ENCODE measurements at regions of chr7 and their contacts with region 1.

Region 1: GRCh38 chr7:24979863-24980533 is at the start of gene OSBPL3:
- DNase-seq: peak; percentile 100
- H3K4me3 ChIP-seq: peak within 1 kb of the TSS; percentile 73 to 97
- H3K27ac ChIP-seq: peak within 1 kb of the TSS; percentile 84 to 87
- H3K4me1 ChIP-seq: peaks cover 21 to 28% of the 10 kb centered on the region in 2 experiments; a peak in 3 of 4 replicates
- H3K27me3 ChIP-seq: no peaks in the 10 kb centered on the region
- CTCF ChIP-seq: no peak
- EP300 ChIP-seq: peak in 1 of 2 experiments; percentile 2; a peak in 1 of 4 replicates
- RAD21 ChIP-seq: peak; percentile 38
- polyA plus RNA-seq, gene OSBPL3: 22.6 and 23.2 TPM in 2 replicates

Region 2: DNA sequence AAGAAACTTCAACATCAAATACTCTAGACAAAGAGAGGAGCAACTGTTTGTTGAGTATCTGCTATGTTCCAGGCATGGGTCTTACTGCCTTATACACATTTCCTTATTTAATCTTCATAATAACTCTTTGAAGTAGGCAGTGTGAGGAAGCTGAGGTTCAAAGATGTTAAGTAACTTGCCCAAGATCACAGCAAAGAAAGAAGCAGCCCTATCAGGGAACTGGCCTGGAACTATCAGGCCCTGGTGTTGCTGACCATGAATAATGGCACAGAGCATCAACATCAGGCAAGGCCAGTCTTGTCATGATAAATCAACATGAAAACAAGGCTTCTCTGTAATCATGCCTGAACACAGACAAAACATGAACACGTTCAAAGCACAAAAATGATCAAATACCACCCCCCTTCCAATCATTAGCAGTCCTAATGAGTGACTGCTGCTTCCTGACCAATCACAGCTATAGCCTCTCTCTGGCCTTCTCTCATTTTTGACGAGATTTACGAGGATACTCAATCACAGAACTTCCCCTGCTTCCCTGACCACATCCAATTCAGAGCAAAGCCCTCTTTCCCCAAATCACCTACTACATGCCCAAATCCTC is 225.0 kb before region 1 on chr7:
- CTCF ChIA-PET with region 1: no interaction called
- POLR2A ChIA-PET with region 1: no interaction called
- DNase-seq: no peak
- H3K4me3 ChIP-seq: no peak overlapping the region
- H3K27ac ChIP-seq: peak overlapping the region in 1 of 2 experiments; percentile 83; a peak in 2 of 4 replicates
- H3K4me1 ChIP-seq: peaks cover 21 to 35% of the 10 kb centered on the region in 2 experiments; a peak in 3 of 4 replicates
- H3K27me3 ChIP-seq: no peaks in the 10 kb centered on the region
- CTCF ChIP-seq: no peak
- EP300 ChIP-seq: no peak
- RAD21 ChIP-seq: no peak

Region 3: GRCh38 chr7:24825931-24826661 is 153.9 kb before region 1 on chr7:
- CTCF ChIA-PET with region 1: interaction called, 57 read pairs
- POLR2A ChIA-PET with region 1: interaction called, 3 read pairs
- DNase-seq: no peak
- H3K4me3 ChIP-seq: no peak overlapping the region
- H3K27ac ChIP-seq: peak overlapping the region; percentile 72 to 95; a peak in 3 of 4 replicates
- H3K4me1 ChIP-seq: peaks cover 24 to 60% of the 10 kb centered on the region in 2 experiments
- H3K27me3 ChIP-seq: no peaks in the 10 kb centered on the region
- CTCF ChIP-seq: no peak
- EP300 ChIP-seq: peak in 1 of 2 experiments; percentile 35; a peak in 1 of 4 replicates
- RAD21 ChIP-seq: no peak

Region 4: DNA sequence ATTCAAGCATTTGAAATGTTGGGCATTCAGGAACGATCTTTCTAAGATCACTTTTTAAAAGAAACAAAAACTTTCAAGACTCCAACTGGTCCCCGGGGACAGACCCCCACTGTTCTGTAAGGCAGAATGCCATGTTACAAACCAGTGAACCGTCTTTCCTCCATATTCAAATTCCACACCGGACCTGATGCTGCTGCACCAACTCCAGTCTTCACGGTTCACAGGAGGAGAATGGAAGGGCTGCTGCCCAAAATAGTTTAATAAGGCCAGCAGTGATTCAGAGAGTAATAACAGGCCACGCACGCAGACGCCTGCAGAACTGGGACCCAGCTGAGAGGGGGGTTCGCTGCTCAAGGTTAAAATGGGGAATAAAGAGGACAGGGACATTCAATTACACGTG is 47.2 kb before region 1 on chr7:
- CTCF ChIA-PET with region 1: interaction called, 10 read pairs
- POLR2A ChIA-PET with region 1: no interaction called
- DNase-seq: no peak
- H3K4me3 ChIP-seq: no peak overlapping the region
- H3K27ac ChIP-seq: no peak overlapping the region
- H3K4me1 ChIP-seq: peaks cover 2 to 13% of the 10 kb centered on the region in 2 experiments; a peak in 3 of 4 replicates
- H3K27me3 ChIP-seq: no peaks in the 10 kb centered on the region
- CTCF ChIP-seq: no peak
- EP300 ChIP-seq: no peak
- RAD21 ChIP-seq: no peak

Region 5: GRCh38 chr7:24965831-24966709 is 13.9 kb before region 1 on chr7:
- CTCF ChIA-PET with region 1: interaction called, 13 read pairs
- POLR2A ChIA-PET with region 1: no interaction called
- DNase-seq: no peak
- H3K4me3 ChIP-seq: no peak overlapping the region
- H3K27ac ChIP-seq: no peak overlapping the region
- H3K4me1 ChIP-seq: peaks cover 12 to 18% of the 10 kb centered on the region in 2 experiments
- H3K27me3 ChIP-seq: no peaks in the 10 kb centered on the region
- CTCF ChIP-seq: no peak
- EP300 ChIP-seq: no peak
- RAD21 ChIP-seq: no peak

Region 6: GRCh38 chr7:25069900-25070443 is 90.0 kb after region 1 on chr7:
- CTCF ChIA-PET with region 1: interaction called, 13 read pairs
- POLR2A ChIA-PET with region 1: no interaction called
- DNase-seq: peak; percentile 83
- H3K4me3 ChIP-seq: peak overlapping the region in 1 of 2 experiments; percentile 30; a peak in 1 of 4 replicates
- H3K27ac ChIP-seq: no peak overlapping the region
- H3K4me1 ChIP-seq: no peaks in the 10 kb centered on the region
- H3K27me3 ChIP-seq: no peaks in the 10 kb centered on the region
- CTCF ChIP-seq: peak; percentile 99
- EP300 ChIP-seq: no peak
- RAD21 ChIP-seq: peak; percentile 93

Region 7: DNA sequence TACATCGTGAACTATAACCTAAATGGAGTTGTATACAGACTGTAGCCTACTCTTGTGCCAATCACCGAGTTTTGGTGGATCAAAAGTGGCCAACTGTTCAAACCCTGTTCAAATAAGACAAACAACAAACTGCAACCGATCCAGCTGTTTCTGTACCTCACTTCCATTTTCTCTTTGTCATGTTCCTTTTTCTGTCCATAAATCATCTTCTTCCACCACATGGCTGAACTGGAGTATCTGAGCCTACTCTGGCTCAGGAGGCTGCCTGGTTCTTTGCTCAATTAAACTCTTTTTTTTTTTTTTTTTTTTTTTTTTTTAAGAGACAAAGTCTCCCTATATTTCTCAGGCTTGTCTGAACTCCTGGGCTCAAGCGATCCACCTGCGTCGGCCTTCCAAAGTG is 307.3 kb after region 1 on chr7:
- CTCF ChIA-PET with region 1: no interaction called
- POLR2A ChIA-PET with region 1: no interaction called
- DNase-seq: no peak
- H3K4me3 ChIP-seq: no peak overlapping the region
- H3K27ac ChIP-seq: no peak overlapping the region
- H3K4me1 ChIP-seq: no peaks in the 10 kb centered on the region
- H3K27me3 ChIP-seq: no peaks in the 10 kb centered on the region
- CTCF ChIP-seq: no peak
- EP300 ChIP-seq: no peak
- RAD21 ChIP-seq: no peak